CD4-positive, alpha-beta T cell (primary cell): ENCODE measurements at regions of chr16 and their contacts with region 1.

Region 1: GRCh38 chr16:21608639-21609328 is 9.4 kb downstream of the METTL9 start:
- DNase-seq: peak in 3 of 14 experiments; percentile 37 to 45 (median 44)
- ATAC-seq: peak; percentile 74
- H3K4me3 ChIP-seq: no peak overlapping the region
- H3K4me3 Mint-ChIP-seq: peak overlapping the region; percentile 13
- H3K27ac ChIP-seq: peak overlapping the region in 1 of 2 donors; percentile 16
- H3K27ac Mint-ChIP-seq: peak overlapping the region; percentile 61
- H3K4me1 ChIP-seq: peaks cover 52% of the 10 kb centered on the region
- H3K4me1 Mint-ChIP-seq: peaks cover 84% of the 10 kb centered on the region
- H3K27me3 ChIP-seq: no peaks in the 10 kb centered on the region
- H3K27me3 Mint-ChIP-seq: no peaks in the 10 kb centered on the region
- CTCF ChIP-seq: no peak

Region 2: GRCh38 chr16:21126518-21126917 is 482.3 kb before region 1 on chr16:
- CTCF ChIA-PET with region 1: no interaction called
- POLR2A ChIA-PET with region 1: no interaction called
- intact Hi-C with region 1: no loop called
- DNase-seq: no peak
- ATAC-seq: no peak
- H3K4me3 ChIP-seq: no peak overlapping the region
- H3K4me3 Mint-ChIP-seq: no peak overlapping the region
- H3K27ac ChIP-seq: no peak overlapping the region
- H3K27ac Mint-ChIP-seq: no peak overlapping the region
- H3K4me1 ChIP-seq: no peaks in the 10 kb centered on the region
- H3K4me1 Mint-ChIP-seq: no peaks in the 10 kb centered on the region
- H3K27me3 ChIP-seq: no peaks in the 10 kb centered on the region
- H3K27me3 Mint-ChIP-seq: no peaks in the 10 kb centered on the region
- CTCF ChIP-seq: no peak

Region 3: GRCh38 chr16:21626659-21627277 is 18.0 kb after region 1 on chr16:
- CTCF ChIA-PET with region 1: interaction called, 4 read pairs
- POLR2A ChIA-PET with region 1: interaction called, 5 read pairs
- intact Hi-C with region 1: loop called in 1 of 2 experiments (anchors 2 kb)
- DNase-seq: peak in 5 of 14 experiments; percentile 14 to 74 (median 66)
- ATAC-seq: peak; percentile 83
- H3K4me3 ChIP-seq: no peak overlapping the region
- H3K4me3 Mint-ChIP-seq: peak overlapping the region; percentile 18
- H3K27ac ChIP-seq: peak overlapping the region in 1 of 2 donors; percentile 28
- H3K27ac Mint-ChIP-seq: peak overlapping the region; percentile 60
- H3K4me1 ChIP-seq: peaks cover 18% of the 10 kb centered on the region
- H3K4me1 Mint-ChIP-seq: peaks cover 52% of the 10 kb centered on the region
- H3K27me3 ChIP-seq: no peaks in the 10 kb centered on the region
- H3K27me3 Mint-ChIP-seq: no peaks in the 10 kb centered on the region
- CTCF ChIP-seq: no peak